ENCODE measurements at regions of chr15 and their contacts with region 1.

Region 1: GRCh38 chr15:89494935-89495637 is 1.3 kb downstream of the RHCG start:
- DNase-seq: no peak
- ATAC-seq: no peak
- H3K4me3 ChIP-seq: no peak overlapping the region
- H3K27ac ChIP-seq: no peak overlapping the region
- H3K4me1 ChIP-seq: peaks cover 29% of the 10 kb centered on the region
- H3K27me3 ChIP-seq: no peaks in the 10 kb centered on the region
- CTCF ChIP-seq: peak; percentile 87

Region 2: DNA sequence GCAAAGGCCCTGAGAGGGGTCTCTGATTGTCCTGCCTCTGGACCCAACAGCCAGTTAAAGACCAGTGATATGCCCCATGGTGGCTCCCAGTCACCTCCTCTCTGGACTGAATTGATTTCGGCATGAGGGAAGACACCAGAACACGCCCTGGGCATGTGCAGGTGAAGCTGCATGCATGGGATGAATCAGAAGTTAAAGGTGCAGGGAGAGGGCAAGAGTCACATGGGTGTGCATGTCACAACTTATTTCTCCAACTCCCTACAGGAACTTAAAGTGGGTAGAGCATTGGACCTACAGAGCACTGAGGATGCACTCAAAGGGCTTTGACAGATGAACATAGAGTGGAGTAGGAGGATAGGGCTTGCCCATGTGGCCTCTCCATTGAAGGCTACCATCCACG is 18.2 kb after region 1 on chr15:
- CTCF ChIA-PET with region 1: interaction called, 10 read pairs
- POLR2A ChIA-PET with region 1: no interaction called
- in situ Hi-C with region 1: no loop called
- intact Hi-C with region 1: no loop called
- DNase-seq: no peak
- ATAC-seq: no peak
- H3K4me3 ChIP-seq: no peak overlapping the region
- H3K27ac ChIP-seq: no peak overlapping the region
- H3K4me1 ChIP-seq: no peaks in the 10 kb centered on the region
- H3K27me3 ChIP-seq: no peaks in the 10 kb centered on the region
- CTCF ChIP-seq: no peak

Region 3: DNA sequence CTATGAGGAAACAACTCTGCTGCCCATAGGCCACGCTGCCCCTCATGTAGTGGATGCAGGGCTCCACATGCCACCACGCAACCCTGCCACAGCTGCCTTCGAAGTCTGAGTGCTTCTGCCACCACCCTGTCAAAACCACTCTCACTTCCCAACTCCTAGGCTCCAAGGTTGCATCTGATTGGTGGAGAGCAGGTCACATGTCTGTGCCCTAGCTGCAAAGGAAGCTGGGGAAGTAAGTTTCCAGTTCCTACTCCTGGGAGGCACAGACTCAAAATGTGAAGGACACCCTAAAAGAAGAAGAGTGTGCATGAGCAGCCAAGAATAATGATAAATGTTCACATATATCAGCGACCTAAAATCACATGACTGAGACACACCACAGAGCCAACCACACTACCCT is 48.3 kb after region 1 on chr15:
- CTCF ChIA-PET with region 1: no interaction called
- POLR2A ChIA-PET with region 1: no interaction called
- in situ Hi-C with region 1: no loop called
- intact Hi-C with region 1: no loop called
- DNase-seq: no peak
- ATAC-seq: 0 out of 2 replicates have a peak, but pooled peaks have one; percentile 26
- H3K4me3 ChIP-seq: no peak overlapping the region
- H3K27ac ChIP-seq: no peak overlapping the region
- H3K4me1 ChIP-seq: no peaks in the 10 kb centered on the region
- H3K27me3 ChIP-seq: no peaks in the 10 kb centered on the region
- CTCF ChIP-seq: no peak

Region 4: GRCh38 chr15:89556413-89557262 is 61.6 kb after region 1 on chr15:
- CTCF ChIA-PET with region 1: no interaction called
- POLR2A ChIA-PET with region 1: no interaction called
- in situ Hi-C with region 1: no loop called
- intact Hi-C with region 1: loop called (anchors 5 kb)
- DNase-seq: peak; percentile 60
- ATAC-seq: peak; percentile 88
- H3K4me3 ChIP-seq: no peak overlapping the region
- H3K27ac ChIP-seq: no peak overlapping the region
- H3K4me1 ChIP-seq: peaks cover 3% of the 10 kb centered on the region
- H3K27me3 ChIP-seq: no peaks in the 10 kb centered on the region
- CTCF ChIP-seq: peak; percentile 81

Measured in Panc1 (cell line).